SK-N-SH (cell line): ENCODE measurements at regions of chr5 and their contacts with region 1.

Region 1: DNA sequence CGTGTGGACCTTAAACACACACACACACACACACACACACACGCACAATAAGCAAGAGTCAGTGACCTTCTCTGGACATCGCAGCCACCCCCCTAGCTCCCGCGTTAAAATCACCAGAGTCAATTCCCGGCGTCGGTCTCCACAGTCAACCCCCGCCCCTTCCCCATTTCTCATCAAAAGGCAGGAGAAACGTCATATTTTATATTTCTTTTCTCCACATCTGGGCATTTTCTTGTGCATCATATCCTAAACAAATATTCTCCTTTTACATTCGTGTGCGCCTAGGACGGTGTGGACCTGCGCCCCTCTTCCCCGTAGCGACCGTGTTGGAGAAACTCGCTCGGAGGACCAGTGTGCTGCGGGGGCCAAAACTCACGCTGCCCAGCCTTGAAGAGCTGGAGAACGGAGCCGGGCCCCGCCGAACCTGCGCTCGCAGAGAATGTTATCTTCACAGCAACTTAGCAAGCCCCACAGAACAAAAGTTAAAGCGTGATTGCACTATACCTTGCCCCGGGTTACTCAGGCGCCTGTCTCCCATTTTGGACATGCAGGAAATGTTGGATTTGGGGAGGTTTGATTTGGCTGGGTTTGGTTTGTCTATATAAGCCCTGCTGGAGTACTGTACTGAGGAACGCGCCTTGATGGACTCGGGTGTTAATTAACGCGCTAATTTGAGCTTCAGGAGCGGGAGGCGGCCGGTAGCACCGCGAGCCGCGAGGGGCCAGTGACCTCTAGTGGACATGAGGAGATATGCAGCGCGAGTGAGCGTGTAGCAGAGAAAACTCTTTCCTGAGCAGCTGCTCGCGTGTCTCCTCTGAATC is 192.4 kb downstream of the MEF2C start:
- DNase-seq: peak; percentile 81
- H3K4me3 ChIP-seq: peak overlapping the region; percentile 24 to 57
- H3K27ac ChIP-seq: no peak overlapping the region
- H3K4me1 ChIP-seq: peaks cover 5 to 14% of the 10 kb centered on the region in 2 experiments; a peak in 1 of 4 replicates
- H3K27me3 ChIP-seq: peaks cover 94% of the 10 kb centered on the region
- CTCF ChIP-seq: peak; percentile 96
- EP300 ChIP-seq: no peak
- RAD21 ChIP-seq: peak; percentile 79

Region 2: GRCh38 chr5:87780831-87781760 is 909.5 kb before region 1 on chr5:
- CTCF ChIA-PET with region 1: interaction called, 83 read pairs
- POLR2A ChIA-PET with region 1: no interaction called
- DNase-seq: peak; percentile 49
- H3K4me3 ChIP-seq: no peak overlapping the region; a peak in 1 of 4 replicates
- H3K27ac ChIP-seq: no peak overlapping the region
- H3K4me1 ChIP-seq: no peaks in the 10 kb centered on the region
- H3K27me3 ChIP-seq: peaks cover 11% of the 10 kb centered on the region; the same call in 1 of the 2 replicates
- CTCF ChIP-seq: peak; percentile 93
- EP300 ChIP-seq: no peak
- RAD21 ChIP-seq: peak; percentile 98

Region 3: DNA sequence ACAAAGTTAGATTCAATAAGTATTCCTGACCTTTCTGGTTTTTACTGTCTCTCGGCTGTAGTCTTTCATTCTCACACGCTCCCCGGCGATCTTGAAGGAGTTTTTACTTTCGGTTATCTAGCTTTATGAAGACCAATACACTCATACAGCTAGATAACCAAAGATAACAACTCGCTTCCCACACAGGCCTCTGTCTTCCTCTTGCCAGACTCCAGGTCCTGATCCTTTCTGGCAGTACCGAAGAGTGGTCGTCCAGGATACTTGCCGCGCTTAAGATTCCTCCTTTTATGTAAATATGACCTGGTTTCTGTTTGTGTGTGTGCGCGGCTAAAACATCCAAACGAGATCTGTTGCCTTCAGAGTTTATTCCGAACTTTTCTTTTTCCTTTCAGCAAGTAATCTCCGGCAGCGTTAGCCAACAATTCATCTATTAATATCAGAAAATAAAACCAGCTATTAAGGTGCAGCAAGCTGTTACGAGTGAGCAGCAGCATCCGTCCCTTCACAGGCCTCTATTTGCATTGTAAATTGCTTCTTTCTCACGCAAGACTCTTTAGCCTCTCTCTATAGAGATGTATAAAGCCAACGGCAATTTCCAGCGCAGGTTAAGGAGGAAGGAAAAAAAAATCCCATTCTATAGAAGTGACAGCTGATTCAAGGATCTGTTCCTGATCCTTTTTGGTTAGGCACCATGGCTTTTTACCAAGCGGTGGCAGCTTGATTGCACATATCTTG is 23.7 kb before region 1 on chr5:
- CTCF ChIA-PET with region 1: interaction called, 14 read pairs
- POLR2A ChIA-PET with region 1: no interaction called
- DNase-seq: no peak
- H3K4me3 ChIP-seq: peak overlapping the region; percentile 27 to 48; a peak in 3 of 4 replicates
- H3K27ac ChIP-seq: no peak overlapping the region
- H3K4me1 ChIP-seq: peaks cover 0 to 2% of the 10 kb centered on the region in 2 experiments; a peak in 1 of 4 replicates
- H3K27me3 ChIP-seq: peaks cover 64% of the 10 kb centered on the region
- CTCF ChIP-seq: no peak
- EP300 ChIP-seq: no peak
- RAD21 ChIP-seq: no peak

Region 4: DNA sequence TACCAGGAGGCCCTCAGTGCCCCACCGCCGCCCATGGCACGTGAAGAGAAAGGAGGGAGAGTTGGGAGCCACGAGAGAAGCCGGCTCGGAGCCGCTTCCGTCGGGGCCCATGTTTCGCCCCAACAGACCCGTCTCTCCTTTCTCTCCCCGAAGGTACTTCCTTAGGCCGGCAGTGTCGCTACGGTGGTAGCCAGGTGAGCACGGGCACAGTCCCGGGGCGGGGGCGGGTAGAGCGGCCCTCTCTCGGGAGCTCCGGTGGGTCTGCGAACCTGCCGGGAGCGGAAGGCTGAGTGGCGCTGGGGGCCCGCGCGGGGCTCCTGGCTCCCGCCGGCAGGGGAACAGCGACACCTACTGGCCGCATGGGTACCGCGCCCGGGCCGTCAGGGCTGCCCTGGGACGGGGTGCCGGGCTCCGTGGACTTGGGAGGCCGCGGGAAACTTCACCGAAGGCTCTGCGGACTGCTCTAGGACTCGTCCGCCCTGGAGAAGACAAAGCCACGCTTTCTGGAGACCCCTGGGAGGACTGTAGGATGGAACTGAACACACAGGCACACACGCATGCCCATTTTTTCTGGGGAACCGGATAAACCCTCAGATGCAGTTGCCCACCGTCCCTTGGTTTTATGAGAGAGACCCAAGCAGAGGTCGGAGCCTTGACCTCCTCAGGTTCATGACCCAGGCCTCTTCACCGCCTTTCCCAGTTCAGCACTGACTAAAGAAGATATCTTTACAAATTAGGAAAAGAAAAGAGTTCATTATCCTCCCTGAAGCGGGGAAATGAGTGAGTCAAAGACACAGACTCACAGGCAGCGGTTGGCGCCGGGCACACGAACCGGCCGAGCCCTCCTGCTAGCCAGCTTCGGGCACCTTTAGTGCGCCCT is 10.1 kb before region 1 on chr5:
- CTCF ChIA-PET with region 1: interaction called, 60 read pairs
- POLR2A ChIA-PET with region 1: no interaction called
- DNase-seq: peak; percentile 94
- H3K4me3 ChIP-seq: peak overlapping the region; percentile 24 to 52
- H3K27ac ChIP-seq: no peak overlapping the region
- H3K4me1 ChIP-seq: peaks cover 6 to 10% of the 10 kb centered on the region in 2 experiments; a peak in 1 of 4 replicates
- H3K27me3 ChIP-seq: peaks cover 93% of the 10 kb centered on the region
- CTCF ChIP-seq: peak; percentile 90
- EP300 ChIP-seq: no peak
- RAD21 ChIP-seq: peak; percentile 73

Region 5: DNA sequence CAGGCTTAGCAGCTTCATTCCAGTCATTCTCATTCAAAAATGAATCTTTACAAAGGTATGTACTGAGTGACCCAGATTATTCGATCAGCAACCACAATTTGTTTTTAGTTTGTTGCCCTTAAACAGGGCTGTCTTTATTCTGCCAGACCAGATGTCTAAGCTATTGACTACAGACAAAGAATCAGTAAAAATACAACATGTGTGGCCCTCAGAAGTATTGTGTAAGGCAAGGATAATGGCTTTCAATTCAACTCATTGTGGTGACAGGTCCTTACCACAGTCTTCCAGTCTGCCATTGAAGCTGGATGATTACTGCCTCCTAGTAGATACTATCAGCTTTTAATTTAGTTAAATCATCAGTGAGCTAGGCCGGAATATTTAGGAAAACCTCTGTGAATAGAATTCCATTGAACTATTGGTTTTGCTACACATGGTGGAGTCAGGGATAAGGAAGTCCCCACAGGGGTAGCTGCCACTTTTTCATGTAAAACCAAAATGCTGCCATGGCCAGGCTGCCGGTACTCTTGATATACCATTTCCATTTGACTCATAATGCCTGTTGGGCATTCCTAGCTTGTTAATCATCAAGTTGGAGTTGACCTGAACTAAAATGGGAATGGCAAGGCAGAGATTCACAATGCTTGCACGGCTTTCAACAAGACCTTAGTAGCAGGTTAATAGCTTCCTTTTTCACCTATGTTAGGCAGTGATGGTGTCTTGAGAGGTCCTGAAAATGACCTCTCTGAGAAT is 16.8 kb after region 1 on chr5:
- CTCF ChIA-PET with region 1: interaction called, 37 read pairs
- POLR2A ChIA-PET with region 1: no interaction called
- DNase-seq: no peak
- H3K4me3 ChIP-seq: no peak overlapping the region
- H3K27ac ChIP-seq: no peak overlapping the region
- H3K4me1 ChIP-seq: no peaks in the 10 kb centered on the region; a peak in 1 of 4 replicates
- H3K27me3 ChIP-seq: peaks cover 5% of the 10 kb centered on the region; the same call in 1 of the 2 replicates
- CTCF ChIP-seq: no peak
- EP300 ChIP-seq: no peak
- RAD21 ChIP-seq: no peak

Region 6: DNA sequence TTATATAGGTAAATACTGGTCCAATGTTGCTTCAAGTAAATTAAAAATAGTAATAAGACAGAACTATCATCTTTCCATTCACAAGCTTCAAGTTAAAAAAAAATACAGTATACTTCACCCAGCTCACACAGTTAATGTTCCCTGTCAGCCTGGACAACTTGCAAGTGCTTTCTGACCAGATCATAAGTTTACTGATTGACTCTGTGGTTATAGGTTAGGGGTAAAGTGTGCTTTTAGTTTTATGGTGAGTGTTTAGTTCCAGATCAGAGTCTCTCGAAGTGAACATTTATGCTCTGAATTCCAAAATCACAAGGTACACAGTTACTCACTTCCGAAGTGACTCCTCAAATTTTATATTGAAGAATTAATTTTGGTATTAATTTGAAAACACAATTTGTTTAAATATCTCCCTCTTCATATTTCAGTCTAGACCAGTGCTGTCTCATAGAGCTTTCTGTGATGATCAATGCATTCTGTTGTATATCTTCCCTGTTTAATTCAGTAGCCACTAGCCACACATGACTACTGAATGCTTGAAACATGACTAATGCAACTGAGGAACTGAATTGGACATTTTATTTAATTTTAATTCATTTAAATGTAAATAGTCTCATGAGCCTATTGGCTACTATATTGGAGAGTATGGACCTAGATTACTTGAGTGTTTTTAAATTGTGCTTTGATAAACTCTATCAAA is 101.7 kb after region 1 on chr5:
- CTCF ChIA-PET with region 1: no interaction called
- POLR2A ChIA-PET with region 1: no interaction called
- DNase-seq: no peak
- H3K4me3 ChIP-seq: no peak overlapping the region
- H3K27ac ChIP-seq: no peak overlapping the region
- H3K4me1 ChIP-seq: no peaks in the 10 kb centered on the region
- H3K27me3 ChIP-seq: no peaks in the 10 kb centered on the region
- CTCF ChIP-seq: no peak
- EP300 ChIP-seq: no peak
- RAD21 ChIP-seq: no peak

Region 7: GRCh38 chr5:88836195-88836838 is 145.7 kb after region 1 on chr5:
- CTCF ChIA-PET with region 1: no interaction called
- POLR2A ChIA-PET with region 1: no interaction called
- DNase-seq: no peak
- H3K4me3 ChIP-seq: no peak overlapping the region
- H3K27ac ChIP-seq: no peak overlapping the region
- H3K4me1 ChIP-seq: no peaks in the 10 kb centered on the region; a peak in 1 of 4 replicates
- H3K27me3 ChIP-seq: no peaks in the 10 kb centered on the region
- CTCF ChIP-seq: no peak
- EP300 ChIP-seq: no peak
- RAD21 ChIP-seq: no peak